ENCODE measurements at regions of chr12 and their contacts with region 1.

Region 1: GRCh38 chr12:46382964-46383653 is 10.5 kb upstream of the SLC38A2 start:
- DNase-seq: peak; percentile 81
- ATAC-seq: peak; percentile 80
- H3K4me3 ChIP-seq: peak overlapping the region; percentile 80
- H3K27ac ChIP-seq: peak overlapping the region; percentile 89
- H3K4me1 ChIP-seq: peaks cover 23% of the 10 kb centered on the region
- H3K27me3 ChIP-seq: no peaks in the 10 kb centered on the region
- CTCF ChIP-seq: peak; percentile 19 to 39 (median 34); a peak in 4 of 6 replicates
- EP300 ChIP-seq: no peak; a peak in 2 of 4 replicates
- POLR2A ChIP-seq: peak; percentile 81
- RAD21 ChIP-seq: peak; percentile 39

Region 2: GRCh38 chr12:45959728-45960127 is 423.4 kb before region 1 on chr12:
- CTCF ChIA-PET with region 1: no interaction called
- POLR2A ChIA-PET with region 1: no interaction called
- RAD21 ChIA-PET with region 1: no interaction called
- SMC1A ChIA-PET with region 1: no interaction called
- in situ Hi-C with region 1: no loop called
- intact Hi-C with region 1: no loop called
- DNase-seq: no peak
- ATAC-seq: no peak
- H3K4me3 ChIP-seq: no peak overlapping the region
- H3K27ac ChIP-seq: no peak overlapping the region
- H3K4me1 ChIP-seq: no peaks in the 10 kb centered on the region
- H3K27me3 ChIP-seq: no peaks in the 10 kb centered on the region
- CTCF ChIP-seq: no peak
- EP300 ChIP-seq: no peak
- POLR2A ChIP-seq: no peak
- RAD21 ChIP-seq: no peak

Region 3: DNA sequence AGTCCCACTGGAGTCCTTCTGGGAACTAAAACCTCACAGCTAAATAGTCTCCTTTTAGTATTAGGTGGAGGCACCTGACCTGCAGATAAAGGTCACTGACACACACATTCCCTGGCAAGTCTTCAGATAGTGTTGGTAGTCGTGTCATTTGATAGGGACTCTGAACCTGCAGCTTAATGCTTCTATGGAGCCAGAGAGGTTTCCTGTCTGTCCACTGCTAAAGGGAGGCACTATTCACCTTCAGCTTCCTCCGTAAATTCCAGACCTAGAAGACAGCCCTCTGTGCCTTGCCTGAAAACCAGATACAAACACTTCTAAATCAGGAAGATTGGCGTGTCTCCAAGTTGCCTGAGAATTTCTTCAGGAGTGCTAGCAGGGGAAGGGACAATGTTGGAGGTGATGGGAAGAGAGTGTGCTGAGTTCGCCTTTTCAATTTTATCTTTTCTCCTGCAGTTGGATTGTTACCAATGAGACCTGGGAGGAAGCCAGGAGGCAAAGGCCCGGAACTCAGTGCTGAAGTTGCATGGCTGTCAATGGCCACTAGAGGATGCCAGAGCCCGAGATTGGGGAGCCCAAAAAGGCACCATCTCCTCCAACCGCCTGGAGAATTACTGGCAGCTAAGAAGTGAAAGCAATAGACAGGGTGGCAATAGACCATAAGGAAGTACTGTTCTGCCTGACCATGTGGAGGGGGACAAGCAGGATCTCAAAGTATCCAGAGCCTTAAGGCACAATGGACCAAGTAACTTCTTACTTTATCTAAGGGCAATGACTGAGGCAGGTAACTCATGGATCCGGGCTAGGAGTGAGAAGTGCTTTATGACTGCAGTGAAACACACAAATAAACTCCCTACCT is 311.1 kb before region 1 on chr12:
- CTCF ChIA-PET with region 1: interaction called, 3 read pairs
- POLR2A ChIA-PET with region 1: no interaction called
- RAD21 ChIA-PET with region 1: no interaction called
- SMC1A ChIA-PET with region 1: no interaction called
- in situ Hi-C with region 1: no loop called
- intact Hi-C with region 1: loop called (anchors 5 kb)
- DNase-seq: peak; percentile 57
- ATAC-seq: peak; percentile 99
- H3K4me3 ChIP-seq: no peak overlapping the region
- H3K27ac ChIP-seq: peak overlapping the region; percentile 39; the same call in 1 of the 2 replicates
- H3K4me1 ChIP-seq: peaks cover 11% of the 10 kb centered on the region
- H3K27me3 ChIP-seq: no peaks in the 10 kb centered on the region
- CTCF ChIP-seq: peak; percentile 97 to 100 (median 99)
- EP300 ChIP-seq: no peak
- POLR2A ChIP-seq: no peak
- RAD21 ChIP-seq: peak; percentile 97

Region 4: GRCh38 chr12:46372544-46373110 is 10.5 kb before region 1 on chr12 and contains the start of gene SLC38A2:
- CTCF ChIA-PET with region 1: interaction called, 13 read pairs
- POLR2A ChIA-PET with region 1: interaction called, 17 read pairs
- RAD21 ChIA-PET with region 1: interaction called, 19 read pairs
- SMC1A ChIA-PET with region 1: interaction called, 28 read pairs
- in situ Hi-C with region 1: no loop called
- intact Hi-C with region 1: loop called (anchors 1 kb)
- DNase-seq: no peak
- ATAC-seq: peak; percentile 90
- H3K4me3 ChIP-seq: peak within 1 kb of the TSS; percentile 84
- H3K27ac ChIP-seq: peak within 1 kb of the TSS; percentile 85
- H3K4me1 ChIP-seq: peaks cover 10% of the 10 kb centered on the region
- H3K27me3 ChIP-seq: no peaks in the 10 kb centered on the region
- CTCF ChIP-seq: no peak
- EP300 ChIP-seq: no peak
- POLR2A ChIP-seq: peak; percentile 99
- RAD21 ChIP-seq: no peak
- polyA plus RNA-seq, gene SLC38A2: 36.2 to 47.3 TPM

Region 5: GRCh38 chr12:46459861-46460545 is 76.9 kb after region 1 on chr12:
- CTCF ChIA-PET with region 1: interaction called, 3 read pairs
- POLR2A ChIA-PET with region 1: no interaction called
- RAD21 ChIA-PET with region 1: interaction called, 11 read pairs
- SMC1A ChIA-PET with region 1: interaction called, 4 read pairs
- in situ Hi-C with region 1: no loop called
- intact Hi-C with region 1: no loop called
- DNase-seq: no peak
- ATAC-seq: peak; percentile 64
- H3K4me3 ChIP-seq: no peak overlapping the region
- H3K27ac ChIP-seq: no peak overlapping the region
- H3K4me1 ChIP-seq: peaks cover 22% of the 10 kb centered on the region
- H3K27me3 ChIP-seq: no peaks in the 10 kb centered on the region
- CTCF ChIP-seq: no peak
- EP300 ChIP-seq: no peak
- POLR2A ChIP-seq: no peak
- RAD21 ChIP-seq: no peak

Region 6: DNA sequence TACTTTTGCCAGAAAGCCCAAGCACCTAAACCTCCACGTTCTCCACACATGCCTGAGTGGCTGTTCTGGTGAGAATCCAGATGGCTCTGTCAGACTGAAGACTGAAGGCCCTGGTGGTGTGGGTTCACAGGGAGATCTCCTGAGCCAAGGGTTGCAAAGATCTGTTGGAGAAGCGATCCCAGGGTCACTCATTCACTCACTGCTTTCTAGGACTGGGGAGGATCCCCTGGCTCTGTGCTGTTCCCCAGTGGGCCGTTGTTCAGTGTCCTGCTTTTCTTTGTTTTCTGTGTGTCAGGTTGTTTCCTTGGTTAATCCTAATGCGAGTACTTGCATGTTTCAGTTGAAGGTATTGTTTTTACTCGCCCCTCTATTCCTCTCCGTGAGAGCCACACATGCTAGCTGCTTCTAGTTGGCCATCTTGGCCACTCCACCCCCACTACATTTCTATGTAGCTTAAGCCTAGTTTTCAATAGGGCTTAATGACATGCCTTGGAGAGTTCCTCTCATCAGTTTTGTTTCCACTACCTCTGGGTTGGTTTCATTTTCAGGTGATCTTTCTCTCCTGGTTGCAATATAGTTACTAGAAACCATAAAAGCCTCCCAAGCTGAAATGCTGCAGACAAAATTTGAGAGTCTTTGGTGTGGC is 133.9 kb after region 1 on chr12:
- CTCF ChIA-PET with region 1: interaction called, 5 read pairs
- POLR2A ChIA-PET with region 1: interaction called, 8 read pairs
- RAD21 ChIA-PET with region 1: interaction called, 13 read pairs
- SMC1A ChIA-PET with region 1: interaction called, 12 read pairs
- in situ Hi-C with region 1: no loop called
- intact Hi-C with region 1: loop called (anchors 2 kb)
- DNase-seq: peak; percentile 85
- ATAC-seq: peak; percentile 96
- H3K4me3 ChIP-seq: peak overlapping the region; percentile 18; the same call in 1 of the 2 replicates
- H3K27ac ChIP-seq: peak overlapping the region; percentile 97
- H3K4me1 ChIP-seq: peaks cover 30% of the 10 kb centered on the region
- H3K27me3 ChIP-seq: no peaks in the 10 kb centered on the region
- CTCF ChIP-seq: no peak
- EP300 ChIP-seq: peak in 1 of 2 experiments; percentile 48; a peak in 1 of 4 replicates
- POLR2A ChIP-seq: no peak
- RAD21 ChIP-seq: peak; percentile 24